Lower leg skin (tissue), 4 donors: ENCODE measurements at regions of chr2 and their contacts with region 1.

Region 1: GRCh38 chr2:74876081-74876886 is 42.4 kb downstream of the HK2 start:
- DNase-seq: peak; percentile 39 to 86
- H3K4me3 ChIP-seq: no peak overlapping the region
- CTCF ChIP-seq: no peak
- POLR2A ChIP-seq: no peak

Region 2: GRCh38 chr2:74715078-74715791 is 161.0 kb before region 1 on chr2:
- intact Hi-C with region 1: loop called (anchors 5 kb)
- DNase-seq: peak; percentile 75 to 95
- H3K4me3 ChIP-seq: peak overlapping the region; percentile 29
- CTCF ChIP-seq: peak in 1 of 3 donors; percentile 9
- POLR2A ChIP-seq: no peak

Region 3: GRCh38 chr2:75432761-75433361 is 556.6 kb after region 1 on chr2:
- intact Hi-C with region 1: no loop called
- DNase-seq: no peak
- H3K4me3 ChIP-seq: no peak overlapping the region
- CTCF ChIP-seq: no peak
- POLR2A ChIP-seq: no peak